MCF 10A (cell line): ENCODE measurements at regions of chr2 and their contacts with region 1.

Region 1: DNA sequence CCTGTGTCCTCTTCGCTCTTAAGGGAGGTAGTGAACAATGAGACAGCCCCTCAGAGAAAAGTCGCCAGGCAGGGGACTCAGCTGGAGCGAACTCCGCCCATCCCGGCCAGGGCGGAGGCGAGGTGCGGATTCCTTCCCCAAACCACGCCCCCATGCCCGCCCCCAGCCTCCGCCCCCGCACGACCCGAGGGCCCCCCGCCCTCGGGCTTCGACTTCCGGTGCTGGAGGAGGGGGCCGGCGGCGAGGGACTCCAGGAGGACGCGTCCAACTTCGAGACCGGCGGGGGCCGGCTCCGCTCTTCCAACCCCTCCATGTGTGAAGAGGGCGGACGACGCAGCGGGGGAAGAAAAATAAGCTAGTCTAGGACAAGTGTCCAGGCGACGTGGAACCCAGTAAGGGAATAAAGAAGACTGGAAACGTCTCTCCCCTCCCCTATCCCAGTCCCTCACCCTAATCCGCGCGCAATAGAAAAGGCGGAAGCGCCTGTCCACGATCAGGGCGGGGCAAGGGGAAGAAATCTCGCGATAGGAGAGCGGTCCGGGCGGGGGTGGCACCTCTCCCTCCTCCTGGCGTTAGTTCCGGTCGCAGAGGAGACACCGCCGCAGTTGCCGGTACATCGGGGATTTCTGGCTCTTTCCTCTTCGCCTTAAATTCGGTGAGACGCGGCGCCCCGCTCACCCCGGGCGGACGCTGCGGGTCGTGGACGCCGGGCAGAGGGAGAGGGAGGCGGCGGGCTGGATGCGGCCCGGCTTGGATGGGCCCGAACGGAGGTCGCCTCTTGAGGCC is at the start of gene BZW1:
- DNase-seq: peak; percentile 97
- H3K4me3 Mint-ChIP-seq: peak within 1 kb of the TSS; percentile 99
- H3K27ac Mint-ChIP-seq: peak within 1 kb of the TSS; percentile 98
- H3K4me1 Mint-ChIP-seq: peaks cover 41% of the 10 kb centered on the region
- H3K27me3 Mint-ChIP-seq: no peaks in the 10 kb centered on the region
- CTCF ChIP-seq: no peak
- total RNA-seq, gene BZW1: 353 and 371 TPM in 2 replicates

Region 2: DNA sequence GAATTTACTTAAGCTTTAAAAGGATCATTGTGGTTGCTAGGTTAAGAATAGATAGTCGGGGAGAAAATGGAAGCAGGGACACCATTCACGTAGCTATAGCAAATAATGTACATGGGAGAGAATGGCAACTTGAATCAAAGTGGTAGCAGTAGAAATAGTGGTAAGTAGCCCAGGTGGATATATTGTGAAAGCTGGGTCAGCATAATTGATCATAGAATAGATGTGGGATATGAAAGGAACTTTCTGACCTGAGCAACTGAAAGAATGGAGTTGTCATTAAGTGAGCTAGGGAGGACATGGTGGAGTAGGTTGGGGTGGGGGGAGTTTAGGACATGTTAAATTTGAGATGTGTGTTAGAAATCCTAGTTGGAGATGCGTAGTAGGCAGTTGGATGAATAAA is 283.3 kb before region 1 on chr2:
- CTCF ChIA-PET with region 1: no interaction called
- POLR2A ChIA-PET with region 1: no interaction called
- intact Hi-C with region 1: no loop called
- DNase-seq: no peak
- H3K4me3 Mint-ChIP-seq: no peak overlapping the region
- H3K27ac Mint-ChIP-seq: no peak overlapping the region
- H3K4me1 Mint-ChIP-seq: peaks cover 23% of the 10 kb centered on the region
- H3K27me3 Mint-ChIP-seq: no peaks in the 10 kb centered on the region
- CTCF ChIP-seq: no peak

Region 3: DNA sequence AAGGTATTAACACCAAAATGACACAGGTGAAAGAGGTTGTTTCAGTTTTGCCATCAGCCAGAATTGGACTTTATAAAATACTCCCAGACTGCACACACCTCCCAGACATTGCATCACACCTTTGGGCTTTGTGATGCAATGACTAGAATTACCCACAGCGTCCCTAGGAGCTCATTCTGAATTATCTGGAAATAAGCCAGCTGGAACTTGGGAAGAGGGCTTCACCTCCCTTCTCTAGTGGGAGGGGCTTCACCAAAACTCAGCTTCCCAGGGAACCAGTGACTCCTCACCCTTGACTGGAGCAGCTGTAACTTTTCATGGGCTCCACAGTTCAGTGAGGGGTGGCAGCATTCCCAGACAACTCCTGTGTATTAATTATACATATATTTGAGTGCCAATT is 82.9 kb before region 1 on chr2:
- CTCF ChIA-PET with region 1: interaction called, 3 read pairs
- POLR2A ChIA-PET with region 1: interaction called, 6 read pairs
- intact Hi-C with region 1: loop called (anchors 5 kb)
- DNase-seq: peak; percentile 96
- H3K4me3 Mint-ChIP-seq: no peak overlapping the region
- H3K27ac Mint-ChIP-seq: no peak overlapping the region
- H3K4me1 Mint-ChIP-seq: peaks cover 9% of the 10 kb centered on the region
- H3K27me3 Mint-ChIP-seq: peaks cover 18% of the 10 kb centered on the region
- CTCF ChIP-seq: no peak

Region 4: DNA sequence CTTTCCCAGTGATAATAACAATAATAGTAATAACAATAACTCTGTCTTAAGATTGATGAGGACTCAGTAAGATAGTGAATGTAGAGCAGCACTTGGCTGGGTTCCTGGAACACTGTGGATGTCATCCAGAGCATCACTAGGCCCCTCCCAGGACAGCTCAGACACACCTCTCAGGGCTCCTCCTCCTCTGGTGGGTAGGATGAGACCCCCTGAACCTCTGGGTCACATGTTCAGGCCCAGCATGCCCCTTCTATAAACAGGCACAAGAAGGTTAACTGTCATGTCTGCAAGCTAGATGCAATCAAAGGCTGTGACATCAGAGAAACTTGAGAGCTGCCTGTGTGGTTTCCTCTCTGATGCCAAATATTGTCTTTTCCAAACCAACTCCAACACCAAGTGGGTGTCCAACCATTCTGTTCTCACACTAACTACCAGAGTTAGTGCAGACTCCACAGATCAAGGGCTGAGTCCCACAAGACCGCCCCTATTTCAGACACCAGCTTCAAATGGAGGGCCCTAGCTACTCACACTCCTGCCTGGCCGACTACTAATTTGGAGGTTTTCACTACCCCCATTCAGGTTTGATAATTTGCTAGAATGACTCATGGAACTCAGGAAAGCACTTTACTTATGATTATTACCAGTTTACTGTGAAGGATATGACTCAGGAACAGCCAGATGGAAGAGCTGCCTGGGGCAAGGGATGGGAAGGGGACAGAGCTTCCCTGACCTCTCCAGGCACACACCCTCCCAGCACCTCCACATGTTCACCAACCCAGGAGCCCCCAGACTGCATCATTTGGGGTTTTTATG is 46.2 kb before region 1 on chr2:
- CTCF ChIA-PET with region 1: interaction called, 3 read pairs
- POLR2A ChIA-PET with region 1: interaction called, 23 read pairs
- intact Hi-C with region 1: loop called (anchors 1 kb)
- DNase-seq: peak; percentile 96
- H3K4me3 Mint-ChIP-seq: peak overlapping the region; percentile 11
- H3K27ac Mint-ChIP-seq: peak overlapping the region; percentile 79
- H3K4me1 Mint-ChIP-seq: peaks cover 49% of the 10 kb centered on the region
- H3K27me3 Mint-ChIP-seq: no peaks in the 10 kb centered on the region
- CTCF ChIP-seq: no peak

Region 5: GRCh38 chr2:200795044-200795443 is 16.5 kb before region 1 on chr2:
- CTCF ChIA-PET with region 1: interaction called, 5 read pairs
- POLR2A ChIA-PET with region 1: interaction called, 24 read pairs
- intact Hi-C with region 1: no loop called
- DNase-seq: peak; percentile 77
- H3K4me3 Mint-ChIP-seq: no peak overlapping the region
- H3K27ac Mint-ChIP-seq: no peak overlapping the region
- H3K4me1 Mint-ChIP-seq: peaks cover 22% of the 10 kb centered on the region
- H3K27me3 Mint-ChIP-seq: no peaks in the 10 kb centered on the region
- CTCF ChIP-seq: no peak

Region 6: GRCh38 chr2:200888704-200889625 is 77.4 kb after region 1 on chr2 and contains the starts of genes NIF3L1 and PPIL3:
- CTCF ChIA-PET with region 1: no interaction called
- POLR2A ChIA-PET with region 1: interaction called, 10 read pairs
- intact Hi-C with region 1: loop called (anchors 1 kb)
- DNase-seq: peak; percentile 98
- H3K4me3 Mint-ChIP-seq: peak within 1 kb of the TSS; percentile 98
- H3K27ac Mint-ChIP-seq: peak within 1 kb of the TSS; percentile 98
- H3K4me1 Mint-ChIP-seq: peaks cover 21% of the 10 kb centered on the region
- H3K27me3 Mint-ChIP-seq: no peaks in the 10 kb centered on the region
- CTCF ChIP-seq: no peak
- total RNA-seq, gene NIF3L1: 19.3 and 26.1 TPM in 2 replicates
- total RNA-seq, gene PPIL3: 33.9 and 35.4 TPM in 2 replicates

Region 7: DNA sequence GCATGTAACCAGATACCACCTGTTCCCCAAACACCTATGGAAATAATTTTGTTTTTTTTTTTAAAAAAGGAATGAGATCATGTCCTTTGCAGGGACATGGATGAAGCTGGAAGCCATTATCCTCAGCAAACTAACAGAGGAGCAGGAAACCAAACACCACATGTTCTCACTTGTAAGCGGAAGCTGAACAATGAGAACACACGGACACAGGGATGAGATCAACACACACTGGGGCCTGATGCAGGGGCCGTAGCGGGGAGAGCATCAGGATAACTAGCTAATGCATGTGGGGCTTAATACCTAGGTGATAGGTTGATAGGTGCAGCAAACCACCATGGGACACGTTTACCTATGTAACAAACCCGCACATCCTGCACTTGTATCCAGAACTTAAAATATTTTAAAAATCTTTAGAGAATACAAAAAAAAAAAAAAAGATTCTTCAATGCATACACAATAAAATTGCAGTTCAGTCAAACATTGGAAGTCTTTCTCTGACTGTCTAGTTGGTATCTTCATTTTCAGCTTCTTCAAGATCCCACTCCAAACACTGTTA is 359.8 kb after region 1 on chr2:
- CTCF ChIA-PET with region 1: no interaction called
- POLR2A ChIA-PET with region 1: no interaction called
- intact Hi-C with region 1: loop called (anchors 5 kb)
- DNase-seq: no peak
- H3K4me3 Mint-ChIP-seq: no peak overlapping the region
- H3K27ac Mint-ChIP-seq: no peak overlapping the region
- H3K4me1 Mint-ChIP-seq: no peaks in the 10 kb centered on the region
- H3K27me3 Mint-ChIP-seq: no peaks in the 10 kb centered on the region
- CTCF ChIP-seq: no peak